Ascending aorta (tissue), 2 donors: ENCODE measurements at regions of chr19 and their contacts with region 1.

Region 1: DNA sequence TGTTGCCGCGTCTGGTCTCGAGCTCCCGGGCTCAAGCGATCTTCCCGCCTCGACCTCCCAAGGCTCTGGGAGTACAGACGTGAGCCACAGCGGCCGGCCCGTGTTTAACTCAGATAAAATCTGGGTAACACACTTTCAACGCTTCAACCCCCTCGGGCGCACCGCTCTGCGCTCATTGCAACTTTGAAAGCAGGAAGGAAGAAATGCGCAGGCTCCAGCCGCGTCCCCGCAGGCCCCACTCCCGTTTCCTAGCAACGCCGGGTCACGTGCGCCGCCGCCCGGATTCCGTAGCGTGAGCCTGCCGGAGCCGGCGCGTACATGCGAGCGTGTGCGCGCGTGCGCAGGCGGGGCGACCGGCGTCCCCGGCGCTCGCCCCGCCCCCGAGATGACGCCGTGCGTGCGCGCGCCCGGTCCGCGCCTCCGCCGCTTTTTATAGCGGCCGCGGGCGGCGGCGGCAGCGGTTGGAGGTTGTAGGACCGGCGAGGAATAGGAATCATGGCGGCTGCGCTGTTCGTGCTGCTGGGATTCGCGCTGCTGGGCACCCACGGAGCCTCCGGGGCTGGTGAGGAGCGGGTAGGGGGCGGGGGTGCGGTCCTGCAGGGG is at the start of gene BSG:
- DNase-seq: peak; percentile 86 to 98
- H3K4me3 ChIP-seq: peak within 1 kb of the TSS; percentile 72 to 100
- H3K27ac ChIP-seq: peak within 1 kb of the TSS; percentile 74 to 89
- H3K4me1 ChIP-seq: peaks cover 11 to 39% of the 10 kb centered on the region in 2 donors
- H3K27me3 ChIP-seq: no peaks in the 10 kb centered on the region
- CTCF ChIP-seq: peak in 1 of 3 experiments; percentile 18
- total RNA-seq, gene BSG: 647 TPM

Region 2: GRCh38 chr19:518603-519231 is 53.5 kb before region 1 on chr19:
- intact Hi-C with region 1: no loop called
- DNase-seq: no peak
- H3K4me3 ChIP-seq: no peak overlapping the region
- H3K27ac ChIP-seq: no peak overlapping the region
- H3K4me1 ChIP-seq: no peaks in the 10 kb centered on the region
- H3K27me3 ChIP-seq: no peaks in the 10 kb centered on the region
- CTCF ChIP-seq: no peak

Region 3: DNA sequence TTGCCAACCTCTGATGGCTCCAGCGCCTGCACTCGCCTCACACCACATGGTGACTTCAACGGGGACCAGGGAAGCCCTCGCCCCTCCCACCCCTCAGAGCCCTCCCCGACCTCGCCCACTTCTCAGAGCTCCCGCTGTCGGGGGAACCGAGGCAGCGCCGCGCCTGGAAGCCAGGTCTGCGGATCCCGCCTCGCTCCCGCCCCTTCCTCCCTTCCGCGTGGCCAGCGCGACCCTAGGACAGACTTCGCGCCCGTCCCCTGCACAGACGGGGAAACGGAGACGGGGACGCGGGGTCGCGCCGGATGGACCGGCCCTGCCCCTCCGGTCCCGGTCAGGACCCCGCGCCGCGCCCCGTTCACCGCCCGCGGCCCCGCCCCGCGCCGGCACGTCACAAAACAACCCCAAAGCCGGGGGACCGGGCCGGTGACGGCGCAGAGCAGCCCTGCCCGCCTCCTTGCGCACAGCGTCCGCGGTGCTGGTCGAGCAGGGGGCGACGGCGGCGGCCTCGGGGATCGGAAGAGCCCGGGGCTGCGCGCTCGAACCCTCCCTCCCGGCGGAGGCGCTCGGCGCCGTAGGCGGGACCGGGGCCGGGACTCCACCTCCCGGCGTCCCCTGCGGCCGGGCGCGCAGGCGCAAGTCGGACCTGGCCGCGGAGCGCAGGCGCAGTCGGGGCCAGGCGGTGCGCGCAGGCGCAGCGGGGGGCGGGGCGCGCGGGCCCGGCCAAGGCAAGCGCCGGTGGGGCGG is 41.1 kb before region 1 on chr19:
- intact Hi-C with region 1: loop called (anchors 1 kb)
- DNase-seq: peak in 1 of 2 donors; percentile 89
- H3K4me3 ChIP-seq: peak overlapping the region; percentile 91 to 99
- H3K27ac ChIP-seq: peak overlapping the region; percentile 88 to 95
- H3K4me1 ChIP-seq: peaks cover 16 to 24% of the 10 kb centered on the region in 2 donors
- H3K27me3 ChIP-seq: no peaks in the 10 kb centered on the region
- CTCF ChIP-seq: peak in 1 of 3 experiments; percentile 6

Region 4: GRCh38 chr19:597406-598315 is 25.4 kb after region 1 on chr19:
- intact Hi-C with region 1: no loop called
- DNase-seq: no peak
- H3K4me3 ChIP-seq: no peak overlapping the region
- H3K27ac ChIP-seq: no peak overlapping the region
- H3K4me1 ChIP-seq: no peaks in the 10 kb centered on the region
- H3K27me3 ChIP-seq: no peaks in the 10 kb centered on the region
- CTCF ChIP-seq: no peak

Region 5: DNA sequence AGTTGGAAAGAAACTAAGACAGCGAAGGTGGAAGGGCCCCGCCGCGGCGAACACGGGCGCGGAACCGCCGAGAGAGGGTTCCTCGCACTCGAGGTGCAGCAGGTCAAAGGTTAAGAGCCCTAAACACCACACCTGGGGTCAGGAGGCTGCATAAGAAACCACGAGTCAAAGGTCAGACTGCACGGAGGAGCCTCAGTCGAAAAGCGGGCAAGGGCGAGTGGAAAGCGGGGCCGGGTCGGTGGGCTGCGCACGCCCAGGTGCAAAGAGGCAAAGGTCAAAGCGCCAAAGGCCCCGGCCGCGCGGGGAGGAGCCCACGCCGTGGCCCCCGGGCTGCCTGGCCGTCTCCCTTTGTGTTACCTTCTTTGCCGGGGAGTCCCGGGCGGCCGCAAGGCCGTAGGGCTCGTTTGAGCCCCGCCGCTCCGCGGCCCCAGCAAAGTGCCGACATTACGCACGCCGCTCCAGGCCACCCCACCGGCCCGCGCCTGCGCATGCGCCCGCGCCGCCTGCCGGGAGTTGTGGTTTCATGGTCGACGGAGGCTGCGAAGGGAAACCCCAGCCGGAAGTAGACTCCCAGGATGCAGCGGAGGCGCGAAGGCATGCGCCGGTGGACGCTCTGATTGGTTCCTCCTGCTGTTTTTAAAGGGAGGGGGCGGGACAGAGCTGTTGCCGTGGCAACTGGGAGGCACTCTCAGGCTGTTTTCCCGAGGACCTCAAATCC is 61.0 kb after region 1 on chr19 and contains the start of gene POLRMT:
- intact Hi-C with region 1: loop called (anchors 5 kb)
- DNase-seq: peak; percentile 94 to 99
- H3K4me3 ChIP-seq: peak within 1 kb of the TSS; percentile 56 to 97
- H3K27ac ChIP-seq: peak within 1 kb of the TSS; percentile 53 to 72
- H3K4me1 ChIP-seq: peaks cover 10 to 20% of the 10 kb centered on the region in 2 donors
- H3K27me3 ChIP-seq: no peaks in the 10 kb centered on the region
- CTCF ChIP-seq: no peak
- total RNA-seq, gene POLRMT: 26.8 TPM